Caco-2 (cell line): ENCODE measurements at regions of chr18 and their contacts with region 1.

Region 1: DNA sequence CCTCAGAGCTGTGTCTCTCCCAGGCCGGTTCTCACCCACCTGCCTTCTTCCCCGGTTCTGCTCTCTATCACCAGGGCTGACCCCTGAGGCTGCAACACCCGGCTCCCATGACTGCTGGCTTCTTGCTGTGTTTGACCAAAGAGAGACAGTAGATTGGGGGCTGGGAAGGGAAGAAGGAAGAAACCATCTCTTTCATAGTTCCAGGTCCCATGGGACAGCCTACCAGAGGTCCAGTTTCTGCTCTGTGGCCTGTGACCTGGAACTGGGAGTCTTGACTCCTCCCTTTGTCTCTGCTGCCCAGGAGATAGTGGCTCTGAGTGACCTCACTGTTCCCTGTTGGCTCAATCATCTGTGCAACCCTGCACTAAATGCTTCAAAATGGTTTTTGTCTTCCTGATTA is 38.1 kb downstream of the ALPK2 start:
- DNase-seq: peak in 1 of 2 experiments; percentile 1
- H3K4me3 ChIP-seq: no peak overlapping the region
- H3K4me3 Mint-ChIP-seq: no peak overlapping the region
- H3K27ac Mint-ChIP-seq: peak overlapping the region; percentile 76
- H3K4me1 ChIP-seq: peaks cover 19% of the 10 kb centered on the region
- H3K4me1 Mint-ChIP-seq: peaks cover 6% of the 10 kb centered on the region
- H3K27me3 ChIP-seq: no peaks in the 10 kb centered on the region
- H3K27me3 Mint-ChIP-seq: no peaks in the 10 kb centered on the region
- CTCF ChIP-seq: no peak

Region 2: DNA sequence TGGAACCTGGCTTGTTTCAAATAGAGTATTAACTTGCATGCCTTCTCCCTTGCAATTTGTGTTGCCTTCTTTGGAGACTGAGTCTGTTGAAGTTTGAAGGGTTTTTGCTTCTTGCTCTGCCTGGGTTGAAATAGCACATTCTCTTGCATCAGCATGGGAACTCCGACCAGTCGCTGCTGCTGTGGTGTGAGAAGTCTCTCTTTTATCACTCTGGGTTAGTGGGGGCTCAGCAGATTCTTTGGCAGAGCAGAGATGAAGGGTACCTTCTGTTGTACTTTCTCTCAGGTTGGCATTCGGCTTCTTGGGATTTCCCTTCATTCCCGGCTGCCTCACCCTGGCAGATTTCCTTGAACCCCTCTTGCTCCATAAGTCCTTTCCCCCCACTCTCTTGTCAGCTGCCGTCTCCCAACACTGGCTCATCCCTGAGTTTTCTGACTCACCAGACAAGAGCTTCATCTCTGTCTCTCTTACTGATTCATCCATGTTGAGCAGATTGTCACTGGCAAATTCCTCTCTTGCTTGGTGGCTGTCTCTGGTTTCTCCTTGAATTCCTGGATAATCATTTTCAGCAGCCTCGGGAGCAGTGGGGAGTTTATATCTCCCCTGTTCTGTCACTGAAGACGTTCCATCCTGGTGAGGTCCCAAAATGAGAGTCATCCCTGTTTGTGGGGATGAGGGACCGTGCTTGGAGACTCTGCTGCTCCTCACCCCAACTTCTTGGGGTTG is 11.8 kb before region 1 on chr18:
- CTCF ChIA-PET with region 1: interaction called, 10 read pairs
- POLR2A ChIA-PET with region 1: no interaction called
- intact Hi-C with region 1: no loop called
- DNase-seq: no peak
- H3K4me3 ChIP-seq: no peak overlapping the region
- H3K4me3 Mint-ChIP-seq: peak overlapping the region; percentile 19
- H3K27ac Mint-ChIP-seq: peak overlapping the region; percentile 67
- H3K4me1 ChIP-seq: peaks cover 15% of the 10 kb centered on the region
- H3K4me1 Mint-ChIP-seq: peaks cover 14% of the 10 kb centered on the region
- H3K27me3 ChIP-seq: no peaks in the 10 kb centered on the region
- H3K27me3 Mint-ChIP-seq: no peaks in the 10 kb centered on the region
- CTCF ChIP-seq: no peak

Region 3: GRCh38 chr18:59402432-59403090 is 811.7 kb after region 1 on chr18:
- CTCF ChIA-PET with region 1: no interaction called
- POLR2A ChIA-PET with region 1: no interaction called
- intact Hi-C with region 1: no loop called
- DNase-seq: peak; percentile 43 to 58
- H3K4me3 ChIP-seq: no peak overlapping the region
- H3K4me3 Mint-ChIP-seq: no peak overlapping the region
- H3K27ac Mint-ChIP-seq: no peak overlapping the region
- H3K4me1 ChIP-seq: no peaks in the 10 kb centered on the region
- H3K4me1 Mint-ChIP-seq: no peaks in the 10 kb centered on the region
- H3K27me3 ChIP-seq: no peaks in the 10 kb centered on the region
- H3K27me3 Mint-ChIP-seq: no peaks in the 10 kb centered on the region
- CTCF ChIP-seq: peak; percentile 37 to 47